ENCODE measurements at regions of chr3 and their contacts with region 1.

Region 1: DNA sequence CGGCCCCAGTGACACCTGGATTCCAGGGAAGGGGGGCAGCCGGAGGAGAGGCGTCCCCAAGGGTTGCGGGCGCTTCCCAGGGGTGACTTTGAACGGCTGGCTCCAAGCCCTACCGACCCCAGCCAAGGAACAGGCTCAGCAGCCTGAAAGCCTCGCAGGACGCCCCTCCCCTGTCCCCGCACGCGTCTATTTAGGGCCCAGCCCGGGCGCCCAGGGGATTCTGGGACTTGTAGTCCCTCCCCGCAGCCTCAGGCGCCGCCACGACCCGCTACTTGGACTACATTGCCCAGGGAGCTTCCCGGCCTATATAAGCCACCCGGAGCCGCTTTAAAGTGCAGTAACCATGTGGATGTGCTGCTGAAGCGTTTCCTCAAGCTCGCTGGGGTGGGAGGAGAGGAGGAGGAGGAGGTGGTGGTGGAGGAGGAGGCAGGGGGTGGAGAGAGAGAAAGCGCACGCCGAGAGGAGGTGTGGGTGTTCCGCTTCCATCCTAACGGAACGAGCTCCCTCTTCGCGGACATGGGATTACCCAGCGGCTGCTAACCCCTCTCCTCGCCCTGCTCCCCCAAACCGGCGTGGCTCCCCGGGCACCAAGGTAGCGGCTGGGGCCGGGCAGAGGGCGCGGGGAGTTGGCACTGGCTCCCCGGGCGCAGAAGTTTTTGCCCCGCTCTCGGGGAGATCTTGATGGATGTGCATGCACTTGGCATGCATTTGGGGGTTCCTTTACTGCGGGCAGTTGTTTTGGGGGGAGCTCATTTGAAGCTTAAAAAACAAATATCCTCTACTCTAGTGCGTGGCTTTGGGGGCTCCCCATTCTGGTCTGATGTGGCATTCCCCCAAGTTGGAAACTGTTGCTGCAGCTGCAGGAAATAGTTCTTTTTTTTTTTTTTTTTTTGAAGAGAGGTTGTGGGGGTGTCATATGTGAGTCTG is at the start of gene ITPR1:
- DNase-seq: peak; percentile 97 to 99 (median 98)
- H3K4me3 ChIP-seq: peak within 1 kb of the TSS; percentile 76 to 87
- H3K4me3 Mint-ChIP-seq: peak within 1 kb of the TSS; percentile 91 to 98 (median 96)
- H3K27ac ChIP-seq: peak within 1 kb of the TSS; percentile 71
- H3K27ac Mint-ChIP-seq: peak within 1 kb of the TSS; percentile 90 to 95 (median 94)
- H3K4me1 ChIP-seq: peaks cover 41% of the 10 kb centered on the region
- H3K4me1 Mint-ChIP-seq: peaks cover 27 to 51% (median 42%) of the 10 kb centered on the region in 4 donors
- H3K27me3 ChIP-seq: no peaks in the 10 kb centered on the region
- H3K27me3 Mint-ChIP-seq: peaks cover 2 to 3% of the 10 kb centered on the region in 2 donors
- total RNA-seq, gene ITPR1: 72.4 to 72.8 TPM

Region 2: DNA sequence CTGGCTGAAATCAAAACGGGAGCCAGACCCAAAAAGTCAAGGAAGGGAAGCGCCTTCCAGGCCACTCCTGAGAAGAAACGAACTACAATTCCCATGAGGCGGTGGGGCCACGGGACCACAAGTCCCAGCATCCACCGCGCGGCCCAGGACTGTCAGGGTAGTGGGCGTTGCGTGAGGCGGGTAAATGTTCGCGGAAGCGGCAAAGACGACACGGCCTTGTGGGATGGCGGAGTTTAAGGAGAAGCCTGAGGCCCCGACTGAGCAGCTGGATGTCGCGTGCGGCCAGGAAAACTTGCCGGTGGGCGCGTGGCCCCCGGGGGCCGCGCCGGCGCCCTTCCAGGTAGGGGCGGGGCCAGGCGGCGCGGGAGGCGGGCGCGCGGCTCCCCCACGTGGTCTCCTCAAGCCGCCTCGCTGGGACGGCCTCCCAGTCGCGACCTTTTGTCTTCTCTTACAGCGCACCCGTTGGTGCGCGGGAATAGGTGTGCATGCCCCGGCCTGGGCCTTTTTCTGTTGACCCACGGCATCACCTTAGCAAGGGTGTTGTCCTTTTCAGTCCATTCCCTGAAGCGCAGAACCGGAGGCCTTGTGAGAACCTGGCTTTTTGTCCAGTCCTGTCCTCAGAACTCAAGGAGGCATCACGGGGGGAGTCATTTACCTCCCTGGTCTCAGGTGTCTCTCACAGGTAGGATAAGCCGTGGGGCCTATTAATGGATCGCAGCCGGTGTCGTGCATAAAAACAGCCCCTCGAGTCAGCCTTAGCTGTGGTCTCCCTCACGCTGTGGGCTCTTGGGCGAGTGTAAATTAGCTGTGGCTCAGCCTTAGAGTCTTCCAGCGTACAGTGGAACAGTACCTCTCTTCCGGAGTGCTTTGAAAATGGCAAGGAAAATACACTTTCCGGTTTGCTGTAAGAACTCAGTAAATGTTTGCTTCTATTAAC is 189.8 kb before region 1 on chr3 and contains the start of gene SETMAR:
- CTCF ChIA-PET with region 1: no interaction called
- POLR2A ChIA-PET with region 1: interaction called, 5 read pairs
- intact Hi-C with region 1: loop called (anchors 1 kb)
- DNase-seq: peak; percentile 82 to 85 (median 82)
- H3K4me3 ChIP-seq: peak within 1 kb of the TSS; percentile 68 to 99
- H3K4me3 Mint-ChIP-seq: peak within 1 kb of the TSS; percentile 97 to 99 (median 97)
- H3K27ac ChIP-seq: peak within 1 kb of the TSS; percentile 87
- H3K27ac Mint-ChIP-seq: peak within 1 kb of the TSS; percentile 92 to 100 (median 99)
- H3K4me1 ChIP-seq: peaks cover 23% of the 10 kb centered on the region
- H3K4me1 Mint-ChIP-seq: peaks cover 8 to 33% (median 16%) of the 10 kb centered on the region in 4 donors
- H3K27me3 ChIP-seq: no peaks in the 10 kb centered on the region
- H3K27me3 Mint-ChIP-seq: no peaks in the 10 kb centered on the region
- total RNA-seq, gene SETMAR: 11.1 to 11.5 TPM

Region 3: GRCh38 chr3:4466741-4467521 is 26.3 kb before region 1 on chr3 and contains the start of gene SUMF1:
- CTCF ChIA-PET with region 1: interaction called, 11 read pairs
- POLR2A ChIA-PET with region 1: interaction called, 95 read pairs
- intact Hi-C with region 1: loop called (anchors 1 kb)
- DNase-seq: peak; percentile 67 to 81 (median 74)
- H3K4me3 ChIP-seq: peak within 1 kb of the TSS; percentile 71 to 76
- H3K4me3 Mint-ChIP-seq: peak within 1 kb of the TSS; percentile 91 to 97 (median 93)
- H3K27ac ChIP-seq: peak within 1 kb of the TSS; percentile 71
- H3K27ac Mint-ChIP-seq: peak within 1 kb of the TSS; percentile 84 to 97 (median 93)
- H3K4me1 ChIP-seq: peaks cover 16% of the 10 kb centered on the region
- H3K4me1 Mint-ChIP-seq: peaks cover 9 to 22% (median 17%) of the 10 kb centered on the region in 4 donors
- H3K27me3 ChIP-seq: no peaks in the 10 kb centered on the region
- H3K27me3 Mint-ChIP-seq: no peaks in the 10 kb centered on the region
- total RNA-seq, gene SUMF1: 13.9 to 14.9 TPM

Region 4: GRCh38 chr3:4524088-4525023 is 31.1 kb after region 1 on chr3:
- CTCF ChIA-PET with region 1: interaction called, 25 read pairs
- POLR2A ChIA-PET with region 1: interaction called, 106 read pairs
- intact Hi-C with region 1: loop called (anchors 1 kb)
- DNase-seq: no peak
- H3K4me3 ChIP-seq: no peak overlapping the region
- H3K4me3 Mint-ChIP-seq: no peak overlapping the region
- H3K27ac ChIP-seq: no peak overlapping the region
- H3K27ac Mint-ChIP-seq: no peak overlapping the region
- H3K4me1 ChIP-seq: peaks cover 6% of the 10 kb centered on the region
- H3K4me1 Mint-ChIP-seq: peaks cover 8 to 23% (median 16%) of the 10 kb centered on the region in 4 donors
- H3K27me3 ChIP-seq: no peaks in the 10 kb centered on the region
- H3K27me3 Mint-ChIP-seq: no peaks in the 10 kb centered on the region

Region 5: DNA sequence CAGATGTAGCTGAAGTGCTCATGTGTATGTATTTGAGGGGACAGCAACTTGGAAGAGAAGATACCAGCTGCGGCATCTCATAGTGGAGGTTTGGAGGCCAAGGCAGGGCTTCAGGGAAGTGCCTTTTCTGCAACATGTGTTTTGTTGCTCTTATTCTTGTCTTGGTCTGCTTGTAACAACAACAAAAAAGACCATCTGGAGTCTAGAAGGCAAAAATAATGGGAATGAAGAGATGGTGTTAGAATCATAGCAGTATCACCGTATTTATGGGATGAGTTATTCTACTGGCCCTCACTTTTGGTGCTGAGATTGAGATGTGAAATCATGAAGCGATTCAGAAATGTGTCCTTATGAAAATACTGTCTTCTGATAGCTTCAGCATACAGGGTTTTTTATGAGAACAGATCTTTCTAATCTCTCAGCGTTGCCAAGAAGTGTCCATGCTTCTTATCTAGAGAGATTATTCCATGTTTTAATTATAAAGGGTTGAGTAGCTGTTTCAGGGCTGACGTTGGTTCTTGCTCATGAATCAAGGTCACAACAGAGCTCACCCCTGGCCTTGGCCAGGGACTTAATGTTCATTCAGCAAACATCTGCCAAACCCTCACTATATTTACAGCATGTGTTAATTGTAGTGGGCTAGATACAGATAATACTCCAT is 57.9 kb after region 1 on chr3:
- CTCF ChIA-PET with region 1: no interaction called
- POLR2A ChIA-PET with region 1: no interaction called
- intact Hi-C with region 1: no loop called
- DNase-seq: no peak
- H3K4me3 ChIP-seq: no peak overlapping the region
- H3K4me3 Mint-ChIP-seq: no peak overlapping the region
- H3K27ac ChIP-seq: no peak overlapping the region
- H3K27ac Mint-ChIP-seq: no peak overlapping the region
- H3K4me1 ChIP-seq: no peaks in the 10 kb centered on the region
- H3K4me1 Mint-ChIP-seq: peaks cover 4 to 13% (median 9%) of the 10 kb centered on the region in 4 donors
- H3K27me3 ChIP-seq: no peaks in the 10 kb centered on the region
- H3K27me3 Mint-ChIP-seq: no peaks in the 10 kb centered on the region

Region 6: GRCh38 chr3:4573153-4573552 is 79.9 kb after region 1 on chr3:
- CTCF ChIA-PET with region 1: no interaction called
- POLR2A ChIA-PET with region 1: no interaction called
- intact Hi-C with region 1: no loop called
- DNase-seq: no peak
- H3K4me3 ChIP-seq: no peak overlapping the region
- H3K4me3 Mint-ChIP-seq: no peak overlapping the region
- H3K27ac ChIP-seq: no peak overlapping the region
- H3K27ac Mint-ChIP-seq: peak overlapping the region in 2 of 7 donors; percentile 12 to 18
- H3K4me1 ChIP-seq: no peaks in the 10 kb centered on the region
- H3K4me1 Mint-ChIP-seq: peaks cover 8 to 31% (median 13%) of the 10 kb centered on the region in 4 donors
- H3K27me3 ChIP-seq: no peaks in the 10 kb centered on the region
- H3K27me3 Mint-ChIP-seq: no peaks in the 10 kb centered on the region

Region 7: DNA sequence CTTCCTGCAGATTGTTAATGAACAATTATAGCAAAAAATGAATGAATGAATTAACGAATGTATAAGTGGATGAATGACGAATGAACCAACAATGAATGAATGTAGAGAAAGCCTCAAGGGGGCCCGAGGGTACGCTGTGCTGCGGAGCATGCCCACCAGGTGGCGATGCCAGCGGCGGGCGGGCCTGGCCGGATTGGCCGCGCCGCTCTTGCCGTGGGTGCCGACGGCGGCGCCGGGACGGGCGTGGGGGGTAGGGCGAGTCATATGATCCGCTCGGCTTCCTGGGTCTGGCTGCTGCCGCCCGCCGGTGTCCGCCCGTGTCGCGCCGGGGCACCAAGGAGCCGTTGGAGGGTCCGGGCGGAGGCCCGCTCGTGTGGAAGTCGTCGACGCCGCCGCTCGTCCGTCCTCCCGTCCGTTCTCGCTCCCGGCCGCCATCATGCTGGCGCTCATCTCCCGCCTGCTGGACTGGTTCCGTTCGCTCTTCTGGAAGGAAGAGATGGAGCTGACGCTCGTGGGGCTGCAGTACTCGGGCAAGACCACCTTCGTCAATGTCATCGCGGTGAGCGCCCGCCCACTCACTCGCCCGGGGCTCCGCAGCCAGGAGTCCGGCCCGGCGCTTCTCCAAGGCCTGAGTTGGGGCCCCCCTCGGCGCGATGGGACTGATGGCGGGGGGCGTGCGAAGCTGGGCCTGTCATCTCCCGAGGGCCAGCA is 628.9 kb after region 1 on chr3 and contains the start of gene ARL8B:
- CTCF ChIA-PET with region 1: no interaction called
- POLR2A ChIA-PET with region 1: interaction called, 3 read pairs
- intact Hi-C with region 1: loop called (anchors 10 kb)
- DNase-seq: peak; percentile 87 to 90 (median 88)
- H3K4me3 ChIP-seq: peak within 1 kb of the TSS; percentile 64 to 93
- H3K4me3 Mint-ChIP-seq: peak within 1 kb of the TSS; percentile 84 to 97 (median 92)
- H3K27ac ChIP-seq: peak within 1 kb of the TSS; percentile 94
- H3K27ac Mint-ChIP-seq: peak within 1 kb of the TSS; percentile 92 to 97 (median 93)
- H3K4me1 ChIP-seq: peaks cover 50% of the 10 kb centered on the region
- H3K4me1 Mint-ChIP-seq: peaks cover 26 to 52% (median 39%) of the 10 kb centered on the region in 4 donors
- H3K27me3 ChIP-seq: no peaks in the 10 kb centered on the region
- H3K27me3 Mint-ChIP-seq: no peaks in the 10 kb centered on the region
- total RNA-seq, gene ARL8B: 55.5 to 60.5 TPM

Measured in CD4-positive, alpha-beta memory T cell (primary cell).